ENCODE measurements at regions of chr20 and their contacts with region 1.

Region 1: GRCh38 chr20:61307686-61308478 is 55.8 kb downstream of the CDH4 start:
- DNase-seq: no peak

Region 2: GRCh38 chr20:61184194-61184593 is 123.7 kb before region 1 on chr20:
- intact Hi-C with region 1: loop called in 1 of 2 experiments (anchors 5 kb)
- DNase-seq: no peak

Measured in posterior vena cava (tissue), 2 donors.